Heart right ventricle (tissue), 16 donors: ENCODE measurements at regions of chr1 and their contacts with region 1.

Region 1: GRCh38 chr1:230073371-230074035 is 6.5 kb downstream of the GALNT2 start:
- DNase-seq: no peak
- ATAC-seq: peak in 5 of 8 donors; percentile 12 to 42 (median 34)
- H3K4me3 ChIP-seq: no peak overlapping the region
- H3K27ac ChIP-seq: no peak overlapping the region
- H3K4me1 ChIP-seq: peaks cover 4 to 66% (median 39%) of the 10 kb centered on the region in 9 donors
- H3K27me3 ChIP-seq: no peaks in the 10 kb centered on the region
- CTCF ChIP-seq: no peak

Region 2: GRCh38 chr1:230047114-230047865 is 26.2 kb before region 1 on chr1:
- intact Hi-C with region 1: no loop called
- DNase-seq: no peak
- ATAC-seq: no peak
- H3K4me3 ChIP-seq: no peak overlapping the region
- H3K27ac ChIP-seq: no peak overlapping the region
- H3K4me1 ChIP-seq: no peaks in the 10 kb centered on the region
- H3K27me3 ChIP-seq: peaks cover 0 to 11% (median 2%) of the 10 kb centered on the region in 7 donors
- CTCF ChIP-seq: no peak

Region 3: GRCh38 chr1:230104395-230105244 is 31.1 kb after region 1 on chr1:
- intact Hi-C with region 1: loop called in 1 of 10 experiments (anchors 5 kb)
- DNase-seq: peak; percentile 87 to 90
- ATAC-seq: peak; percentile 80 to 97 (median 93)
- H3K4me3 ChIP-seq: peak overlapping the region in 5 of 10 donors; percentile 7 to 33 (median 13)
- H3K27ac ChIP-seq: peak overlapping the region in 6 of 10 donors; percentile 26 to 87 (median 59)
- H3K4me1 ChIP-seq: peaks cover 8 to 59% (median 45%) of the 10 kb centered on the region in 9 donors
- H3K27me3 ChIP-seq: no peaks in the 10 kb centered on the region
- CTCF ChIP-seq: no peak

Region 4: DNA sequence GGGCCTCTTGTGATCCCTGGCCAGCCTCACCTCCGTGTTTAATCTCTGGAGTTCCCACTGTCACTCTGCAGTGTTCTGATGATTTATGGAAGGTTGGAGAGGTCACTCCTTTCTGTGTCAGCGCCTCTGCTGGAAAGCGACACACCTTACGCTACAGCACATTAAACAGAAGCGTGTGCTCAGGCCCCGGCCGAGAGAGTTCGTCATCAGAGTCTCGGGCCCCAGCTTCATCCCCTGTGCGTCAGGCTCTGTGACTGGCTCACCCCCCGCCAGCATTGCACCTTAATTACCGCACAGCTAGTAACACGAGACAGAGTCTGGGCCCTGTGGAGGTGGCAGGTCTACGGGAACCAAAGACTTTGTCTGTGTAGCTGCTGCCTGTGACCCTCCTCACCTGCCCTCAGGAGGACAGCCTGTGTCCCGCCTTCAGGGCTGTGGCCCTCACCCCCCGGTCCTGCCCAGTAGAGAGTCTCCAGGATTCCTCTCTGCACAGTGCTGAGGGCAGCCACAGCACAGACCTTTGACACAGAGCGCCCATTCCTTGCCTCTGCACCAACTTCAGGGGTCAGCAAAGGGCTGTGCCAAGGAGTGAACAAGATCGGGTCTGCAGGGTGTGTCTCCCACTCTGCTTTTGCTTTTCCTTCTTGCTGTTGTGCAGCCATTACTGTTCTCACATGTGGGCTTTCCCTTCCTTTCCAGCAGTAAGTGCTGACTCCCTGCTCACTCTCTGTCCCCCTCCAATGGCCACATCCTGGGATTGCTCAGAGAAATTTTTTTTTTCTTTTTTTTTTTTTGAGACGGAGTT is 195.1 kb after region 1 on chr1:
- intact Hi-C with region 1: loop called in 1 of 10 experiments (anchors 10 kb)
- DNase-seq: peak in 1 of 2 donors; percentile 57
- ATAC-seq: peak; percentile 56 to 74 (median 70)
- H3K4me3 ChIP-seq: no peak overlapping the region
- H3K27ac ChIP-seq: peak overlapping the region in 1 of 10 donors; percentile 44
- H3K4me1 ChIP-seq: peaks cover 8 to 34% (median 20%) of the 10 kb centered on the region in 9 donors
- H3K27me3 ChIP-seq: no peaks in the 10 kb centered on the region
- CTCF ChIP-seq: peak; percentile 45 to 75 (median 64)